CD4-positive, alpha-beta T cell (primary cell): ENCODE measurements at regions of chr16 and their contacts with region 1.

Region 1: GRCh38 chr16:9008601-9009260 is 45.0 kb upstream of the USP7 start:
- DNase-seq: peak; percentile 47 to 79 (median 60)
- ATAC-seq: peak; percentile 79
- H3K4me3 ChIP-seq: peak overlapping the region; percentile 20
- H3K4me3 Mint-ChIP-seq: no peak overlapping the region
- H3K27ac ChIP-seq: no peak overlapping the region
- H3K27ac Mint-ChIP-seq: no peak overlapping the region
- H3K4me1 ChIP-seq: peaks cover 12% of the 10 kb centered on the region
- H3K4me1 Mint-ChIP-seq: peaks cover 4% of the 10 kb centered on the region
- H3K27me3 ChIP-seq: peaks cover 7% of the 10 kb centered on the region in 2 experiments
- H3K27me3 Mint-ChIP-seq: peaks cover 12% of the 10 kb centered on the region
- CTCF ChIP-seq: peak; percentile 71

Region 2: GRCh38 chr16:8295513-8296237 is 713.1 kb before region 1 on chr16:
- CTCF ChIA-PET with region 1: no interaction called
- POLR2A ChIA-PET with region 1: no interaction called
- intact Hi-C with region 1: no loop called
- DNase-seq: no peak
- ATAC-seq: no peak
- H3K4me3 ChIP-seq: no peak overlapping the region
- H3K4me3 Mint-ChIP-seq: no peak overlapping the region
- H3K27ac ChIP-seq: no peak overlapping the region
- H3K27ac Mint-ChIP-seq: no peak overlapping the region
- H3K4me1 ChIP-seq: no peaks in the 10 kb centered on the region
- H3K4me1 Mint-ChIP-seq: no peaks in the 10 kb centered on the region
- H3K27me3 ChIP-seq: no peaks in the 10 kb centered on the region
- H3K27me3 Mint-ChIP-seq: no peaks in the 10 kb centered on the region
- CTCF ChIP-seq: no peak

Region 3: DNA sequence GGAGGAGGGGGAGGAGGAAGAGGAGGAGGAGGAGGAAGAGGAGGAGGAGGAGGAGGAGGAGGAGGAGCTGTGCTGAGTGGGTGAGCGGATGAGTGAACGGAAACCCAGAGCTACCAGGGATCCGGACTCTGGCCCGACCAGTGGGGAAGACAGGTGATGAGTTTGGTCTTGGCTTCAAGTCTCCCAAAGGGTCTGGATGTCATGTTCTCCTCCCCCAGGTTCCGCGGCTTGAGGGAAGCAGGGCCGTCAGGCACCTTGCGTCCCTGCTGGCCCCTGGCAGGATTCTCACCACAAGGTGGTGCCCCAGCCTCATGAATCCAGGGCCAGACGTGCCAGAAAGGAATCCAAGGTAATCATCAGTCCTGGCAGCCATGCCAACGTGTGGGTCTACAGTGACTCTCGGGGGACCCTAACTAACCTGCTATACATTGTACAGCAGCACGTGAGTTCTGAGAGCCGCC is 347.9 kb before region 1 on chr16:
- CTCF ChIA-PET with region 1: interaction called, 5 read pairs
- POLR2A ChIA-PET with region 1: no interaction called
- intact Hi-C with region 1: loop called in 1 of 2 experiments (anchors 1 kb)
- DNase-seq: peak; percentile 17 to 71 (median 42)
- ATAC-seq: peak; percentile 64
- H3K4me3 ChIP-seq: no peak overlapping the region
- H3K4me3 Mint-ChIP-seq: no peak overlapping the region
- H3K27ac ChIP-seq: no peak overlapping the region
- H3K27ac Mint-ChIP-seq: no peak overlapping the region
- H3K4me1 ChIP-seq: no peaks in the 10 kb centered on the region
- H3K4me1 Mint-ChIP-seq: no peaks in the 10 kb centered on the region
- H3K27me3 ChIP-seq: no peaks in the 10 kb centered on the region
- H3K27me3 Mint-ChIP-seq: no peaks in the 10 kb centered on the region
- CTCF ChIP-seq: peak; percentile 59

Region 4: GRCh38 chr16:8892101-8892575 is 116.6 kb before region 1 on chr16:
- CTCF ChIA-PET with region 1: interaction called, 3 read pairs
- POLR2A ChIA-PET with region 1: no interaction called
- intact Hi-C with region 1: loop called in 1 of 2 experiments (anchors 5 kb)
- DNase-seq: peak in 2 of 14 experiments; percentile 14 to 46
- ATAC-seq: no peak
- H3K4me3 ChIP-seq: no peak overlapping the region
- H3K4me3 Mint-ChIP-seq: no peak overlapping the region
- H3K27ac ChIP-seq: peak overlapping the region; percentile 17 to 50
- H3K27ac Mint-ChIP-seq: peak overlapping the region; percentile 92
- H3K4me1 ChIP-seq: peaks cover 14% of the 10 kb centered on the region
- H3K4me1 Mint-ChIP-seq: peaks cover 16% of the 10 kb centered on the region
- H3K27me3 ChIP-seq: no peaks in the 10 kb centered on the region
- H3K27me3 Mint-ChIP-seq: no peaks in the 10 kb centered on the region
- CTCF ChIP-seq: no peak

Region 5: GRCh38 chr16:8905168-8905762 is 103.5 kb before region 1 on chr16:
- CTCF ChIA-PET with region 1: interaction called, 3 read pairs
- POLR2A ChIA-PET with region 1: no interaction called
- intact Hi-C with region 1: loop called (anchors 1 to 5 kb)
- DNase-seq: peak in 3 of 14 experiments; percentile 37 to 45 (median 38)
- ATAC-seq: peak; percentile 51
- H3K4me3 ChIP-seq: no peak overlapping the region
- H3K4me3 Mint-ChIP-seq: no peak overlapping the region
- H3K27ac ChIP-seq: no peak overlapping the region
- H3K27ac Mint-ChIP-seq: peak overlapping the region; percentile 3
- H3K4me1 ChIP-seq: peaks cover 11% of the 10 kb centered on the region
- H3K4me1 Mint-ChIP-seq: peaks cover 13% of the 10 kb centered on the region
- H3K27me3 ChIP-seq: no peaks in the 10 kb centered on the region
- H3K27me3 Mint-ChIP-seq: no peaks in the 10 kb centered on the region
- CTCF ChIP-seq: peak; percentile 18

Region 6: DNA sequence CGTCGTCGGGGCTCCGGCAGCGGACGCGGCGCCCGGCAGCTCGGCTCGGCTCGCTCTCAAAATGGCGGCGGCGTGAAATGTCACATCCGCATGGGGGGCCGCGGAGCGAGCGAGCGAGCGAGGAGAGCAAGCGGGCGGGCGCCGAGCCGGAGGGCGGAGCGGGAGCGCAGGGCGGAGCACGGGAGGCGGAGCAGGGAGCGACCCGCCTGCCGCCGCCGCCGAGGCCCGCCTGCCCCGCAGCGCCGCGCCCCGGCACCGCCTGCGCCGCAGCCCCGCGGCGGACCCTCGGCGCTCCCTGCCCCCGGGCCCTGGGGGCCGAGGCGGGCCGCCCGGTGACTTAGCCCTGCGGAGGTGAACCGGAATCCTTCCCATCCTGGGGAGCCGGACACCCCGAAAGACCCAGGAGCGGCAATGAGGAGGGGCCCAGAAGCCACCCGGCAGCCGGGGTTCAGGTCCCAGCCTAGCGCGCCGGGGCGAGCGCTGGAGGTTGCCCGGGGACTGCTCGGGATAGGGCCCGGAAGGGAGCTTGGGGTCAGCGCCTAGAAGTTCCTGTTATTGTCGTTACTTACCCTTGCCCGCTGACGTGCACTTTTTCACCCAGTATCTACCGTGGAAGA is 44.8 kb before region 1 on chr16 and contains the start of gene USP7:
- CTCF ChIA-PET with region 1: no interaction called
- POLR2A ChIA-PET with region 1: no interaction called
- intact Hi-C with region 1: loop called in 1 of 2 experiments (anchors 5 kb)
- DNase-seq: peak; percentile 85 to 97 (median 91)
- ATAC-seq: peak; percentile 88
- H3K4me3 ChIP-seq: peak within 1 kb of the TSS; percentile 75
- H3K4me3 Mint-ChIP-seq: peak within 1 kb of the TSS; percentile 97
- H3K27ac ChIP-seq: peak within 1 kb of the TSS; percentile 64 to 81
- H3K27ac Mint-ChIP-seq: peak within 1 kb of the TSS; percentile 94
- H3K4me1 ChIP-seq: peaks cover 42% of the 10 kb centered on the region
- H3K4me1 Mint-ChIP-seq: peaks cover 47% of the 10 kb centered on the region
- H3K27me3 ChIP-seq: no peaks in the 10 kb centered on the region
- H3K27me3 Mint-ChIP-seq: no peaks in the 10 kb centered on the region
- CTCF ChIP-seq: no peak
- total RNA-seq, gene USP7: 259 to 268 TPM

Region 7: GRCh38 chr16:8998114-8998513 is 10.6 kb before region 1 on chr16:
- CTCF ChIA-PET with region 1: no interaction called
- POLR2A ChIA-PET with region 1: no interaction called
- intact Hi-C with region 1: no loop called
- DNase-seq: no peak
- ATAC-seq: no peak
- H3K4me3 ChIP-seq: no peak overlapping the region
- H3K4me3 Mint-ChIP-seq: no peak overlapping the region
- H3K27ac ChIP-seq: no peak overlapping the region
- H3K27ac Mint-ChIP-seq: no peak overlapping the region
- H3K4me1 ChIP-seq: no peaks in the 10 kb centered on the region
- H3K4me1 Mint-ChIP-seq: no peaks in the 10 kb centered on the region
- H3K27me3 ChIP-seq: no peaks in the 10 kb centered on the region
- H3K27me3 Mint-ChIP-seq: no peaks in the 10 kb centered on the region
- CTCF ChIP-seq: no peak

Region 8: GRCh38 chr16:9033125-9033830 is 24.5 kb after region 1 on chr16:
- CTCF ChIA-PET with region 1: no interaction called
- POLR2A ChIA-PET with region 1: no interaction called
- intact Hi-C with region 1: no loop called
- DNase-seq: peak in 3 of 14 experiments; percentile 22 to 35 (median 25)
- ATAC-seq: no peak
- H3K4me3 ChIP-seq: no peak overlapping the region
- H3K4me3 Mint-ChIP-seq: no peak overlapping the region
- H3K27ac ChIP-seq: no peak overlapping the region
- H3K27ac Mint-ChIP-seq: no peak overlapping the region
- H3K4me1 ChIP-seq: no peaks in the 10 kb centered on the region
- H3K4me1 Mint-ChIP-seq: no peaks in the 10 kb centered on the region
- H3K27me3 ChIP-seq: no peaks in the 10 kb centered on the region
- H3K27me3 Mint-ChIP-seq: no peaks in the 10 kb centered on the region
- CTCF ChIP-seq: no peak

Region 9: GRCh38 chr16:9134739-9135138 is 126.0 kb after region 1 on chr16:
- CTCF ChIA-PET with region 1: interaction called, 15 read pairs
- POLR2A ChIA-PET with region 1: no interaction called
- intact Hi-C with region 1: loop called in 1 of 2 experiments (anchors 5 kb)
- DNase-seq: peak; percentile 35 to 77 (median 52)
- ATAC-seq: peak; percentile 80
- H3K4me3 ChIP-seq: no peak overlapping the region
- H3K4me3 Mint-ChIP-seq: no peak overlapping the region
- H3K27ac ChIP-seq: no peak overlapping the region
- H3K27ac Mint-ChIP-seq: peak overlapping the region; percentile 47
- H3K4me1 ChIP-seq: peaks cover 22% of the 10 kb centered on the region
- H3K4me1 Mint-ChIP-seq: peaks cover 30% of the 10 kb centered on the region
- H3K27me3 ChIP-seq: peaks cover 3 to 4% of the 10 kb centered on the region in 2 experiments
- H3K27me3 Mint-ChIP-seq: no peaks in the 10 kb centered on the region
- CTCF ChIP-seq: peak; percentile 72

Region 10: DNA sequence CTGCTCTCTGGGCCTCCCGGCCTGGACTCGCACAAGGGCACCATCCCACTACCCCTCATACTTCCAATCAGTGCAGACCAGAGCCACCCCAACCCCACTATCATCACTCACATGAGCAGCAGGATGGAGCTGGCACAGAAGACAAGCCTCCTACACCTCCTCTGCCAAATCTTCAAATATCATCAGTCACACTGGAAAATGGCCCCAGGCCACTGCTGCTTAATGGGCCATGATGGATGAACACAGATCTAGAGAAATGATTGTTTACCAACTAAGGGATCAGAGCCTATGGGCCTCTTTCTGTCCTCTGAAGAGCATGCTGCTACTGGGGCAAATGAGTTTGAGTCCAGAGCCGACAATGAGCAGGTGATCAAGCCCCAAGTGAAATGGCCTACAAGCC is 1008.0 kb after region 1 on chr16:
- CTCF ChIA-PET with region 1: no interaction called
- POLR2A ChIA-PET with region 1: no interaction called
- intact Hi-C with region 1: no loop called
- DNase-seq: no peak
- ATAC-seq: no peak
- H3K4me3 ChIP-seq: no peak overlapping the region
- H3K4me3 Mint-ChIP-seq: no peak overlapping the region
- H3K27ac ChIP-seq: no peak overlapping the region
- H3K27ac Mint-ChIP-seq: no peak overlapping the region
- H3K4me1 ChIP-seq: no peaks in the 10 kb centered on the region
- H3K4me1 Mint-ChIP-seq: no peaks in the 10 kb centered on the region
- H3K27me3 ChIP-seq: no peaks in the 10 kb centered on the region
- H3K27me3 Mint-ChIP-seq: peaks cover 13% of the 10 kb centered on the region
- CTCF ChIP-seq: no peak